GM12878 (cell line): ENCODE measurements at regions of chr2 and their contacts with region 1.

Region 1: DNA sequence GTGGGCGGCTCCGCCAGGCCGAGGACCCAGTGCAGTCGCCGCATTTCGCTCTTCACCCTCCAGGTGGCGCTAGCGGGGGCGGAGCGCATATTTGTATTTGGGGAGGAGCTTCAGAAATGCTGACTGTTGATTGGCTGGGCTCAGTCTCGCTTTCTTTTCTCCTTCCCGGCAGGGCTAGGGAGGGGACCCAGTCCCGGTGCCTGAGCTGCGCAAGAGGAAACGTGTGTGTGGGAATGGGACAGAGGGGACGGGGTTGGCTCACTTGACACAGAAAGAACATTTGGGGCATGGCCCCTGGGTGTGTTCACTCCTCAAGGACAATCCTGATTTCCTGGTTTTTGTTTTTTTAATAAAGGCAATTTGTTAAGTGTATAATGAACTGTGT is 20.3 kb upstream of the DNMT3A start:
- DNase-seq: peak; percentile 88
- ATAC-seq: peak; percentile 92
- H3K4me3 ChIP-seq: peak overlapping the region; percentile 72
- H3K27ac ChIP-seq: peak overlapping the region; percentile 84
- H3K4me1 ChIP-seq: peaks cover 13% of the 10 kb centered on the region
- H3K27me3 ChIP-seq: no peaks in the 10 kb centered on the region
- CTCF ChIP-seq: peak; percentile 93 to 99 (median 95)
- EP300 ChIP-seq: no peak; a peak in 1 of 4 replicates
- POLR2A ChIP-seq: peak; percentile 87
- RAD21 ChIP-seq: peak; percentile 37; the same call in 1 of the 2 replicates

Region 2: GRCh38 chr2:25301453-25302352 is 60.3 kb before region 1 on chr2:
- CTCF ChIA-PET with region 1: interaction called, 10 read pairs
- POLR2A ChIA-PET with region 1: interaction called, 5 read pairs
- RAD21 ChIA-PET with region 1: interaction called, 7 read pairs
- SMC1A ChIA-PET with region 1: interaction called, 4 read pairs
- in situ Hi-C with region 1: no loop called
- intact Hi-C with region 1: no loop called
- DNase-seq: peak; percentile 95
- ATAC-seq: peak; percentile 95
- H3K4me3 ChIP-seq: peak overlapping the region; percentile 43
- H3K27ac ChIP-seq: peak overlapping the region; percentile 54
- H3K4me1 ChIP-seq: peaks cover 36% of the 10 kb centered on the region
- H3K27me3 ChIP-seq: no peaks in the 10 kb centered on the region
- CTCF ChIP-seq: no peak
- EP300 ChIP-seq: peak; percentile 89 to 92
- POLR2A ChIP-seq: peak; percentile 46; the same call in 1 of the 2 replicates
- RAD21 ChIP-seq: no peak

Region 3: DNA sequence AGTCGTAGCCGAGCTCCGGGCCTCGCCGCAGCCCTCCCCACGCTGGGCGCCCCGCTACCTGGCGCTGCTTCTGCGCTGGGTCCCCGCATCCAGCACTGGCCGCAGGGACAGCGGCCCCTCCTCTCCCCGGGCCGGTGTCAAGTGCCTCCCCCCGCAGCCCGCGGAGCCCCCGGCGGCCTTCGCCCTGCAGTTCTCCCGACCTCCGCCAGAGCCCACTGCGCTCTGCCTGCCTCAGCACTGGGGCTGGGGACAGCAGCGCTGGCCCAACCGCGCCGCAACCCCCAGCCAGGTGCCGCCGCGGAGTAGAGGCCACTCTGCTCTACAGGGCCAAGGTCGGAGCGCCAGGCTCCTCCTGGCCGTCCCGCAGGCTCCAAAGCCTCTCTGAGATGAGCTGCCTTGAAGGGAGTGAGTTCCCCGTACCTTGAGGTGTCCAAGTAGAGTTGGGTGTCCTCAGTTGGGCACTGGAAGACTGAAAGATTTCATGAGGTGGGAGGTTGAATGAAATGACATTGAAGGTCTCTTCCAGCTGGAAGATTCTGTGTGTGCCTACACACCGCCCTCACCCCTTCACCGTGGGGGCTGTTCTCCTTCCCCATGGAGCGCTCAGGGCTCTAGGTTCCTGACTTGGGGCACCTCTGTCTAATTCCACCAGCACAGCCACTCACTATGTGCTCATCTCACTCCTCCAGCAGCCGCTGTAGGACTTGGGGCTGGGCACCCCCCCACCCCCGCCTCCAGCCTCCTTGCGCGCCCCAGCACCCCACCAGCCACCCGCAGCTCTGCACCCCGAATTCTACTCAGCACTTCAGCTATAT is 19.5 kb before region 1 on chr2:
- CTCF ChIA-PET with region 1: interaction called, 43 read pairs
- POLR2A ChIA-PET with region 1: interaction called, 5 read pairs
- RAD21 ChIA-PET with region 1: interaction called, 6 read pairs
- SMC1A ChIA-PET with region 1: interaction called, 8 read pairs
- in situ Hi-C with region 1: no loop called
- intact Hi-C with region 1: no loop called
- DNase-seq: no peak
- ATAC-seq: peak; percentile 94
- H3K4me3 ChIP-seq: peak overlapping the region; percentile 76; the same call in 1 of the 2 replicates
- H3K27ac ChIP-seq: peak overlapping the region; percentile 52
- H3K4me1 ChIP-seq: peaks cover 12% of the 10 kb centered on the region
- H3K27me3 ChIP-seq: no peaks in the 10 kb centered on the region; a peak in 1 of 4 replicates
- CTCF ChIP-seq: peak; percentile 93 to 99 (median 97)
- EP300 ChIP-seq: no peak
- POLR2A ChIP-seq: peak; percentile 50; the same call in 1 of the 2 replicates
- RAD21 ChIP-seq: peak; percentile 90

Region 4: DNA sequence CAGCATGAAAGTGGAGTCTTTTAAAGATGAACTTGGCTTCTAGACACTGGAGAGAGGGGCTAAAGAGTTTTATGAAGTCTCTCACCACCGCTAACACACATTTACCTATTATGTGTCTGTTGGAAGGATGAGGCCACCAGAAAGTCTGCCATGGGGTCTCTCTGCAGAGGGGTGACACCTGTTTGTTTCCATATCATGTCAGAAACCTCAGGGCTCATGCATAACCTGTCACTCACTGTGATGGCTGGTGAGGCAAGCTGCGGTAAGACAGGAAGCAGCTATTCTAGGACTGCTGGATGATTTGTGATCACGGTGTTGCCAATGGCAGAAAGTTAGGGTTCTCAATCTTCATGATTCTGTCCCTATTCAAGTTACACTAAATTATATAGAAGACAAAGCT is 40.4 kb after region 1 on chr2:
- CTCF ChIA-PET with region 1: interaction called, 30 read pairs
- POLR2A ChIA-PET with region 1: interaction called, 23 read pairs
- RAD21 ChIA-PET with region 1: interaction called, 25 read pairs
- SMC1A ChIA-PET with region 1: interaction called, 16 read pairs
- in situ Hi-C with region 1: no loop called
- intact Hi-C with region 1: no loop called
- DNase-seq: no peak
- ATAC-seq: peak; percentile 57
- H3K4me3 ChIP-seq: peak overlapping the region; percentile 35; the same call in 1 of the 2 replicates
- H3K27ac ChIP-seq: peak overlapping the region; percentile 97
- H3K4me1 ChIP-seq: peaks cover 58% of the 10 kb centered on the region
- H3K27me3 ChIP-seq: no peaks in the 10 kb centered on the region
- CTCF ChIP-seq: no peak
- EP300 ChIP-seq: peak in 1 of 2 experiments; percentile 74; a peak in 2 of 4 replicates
- POLR2A ChIP-seq: peak; percentile 32; the same call in 1 of the 2 replicates
- RAD21 ChIP-seq: no peak

Region 5: DNA sequence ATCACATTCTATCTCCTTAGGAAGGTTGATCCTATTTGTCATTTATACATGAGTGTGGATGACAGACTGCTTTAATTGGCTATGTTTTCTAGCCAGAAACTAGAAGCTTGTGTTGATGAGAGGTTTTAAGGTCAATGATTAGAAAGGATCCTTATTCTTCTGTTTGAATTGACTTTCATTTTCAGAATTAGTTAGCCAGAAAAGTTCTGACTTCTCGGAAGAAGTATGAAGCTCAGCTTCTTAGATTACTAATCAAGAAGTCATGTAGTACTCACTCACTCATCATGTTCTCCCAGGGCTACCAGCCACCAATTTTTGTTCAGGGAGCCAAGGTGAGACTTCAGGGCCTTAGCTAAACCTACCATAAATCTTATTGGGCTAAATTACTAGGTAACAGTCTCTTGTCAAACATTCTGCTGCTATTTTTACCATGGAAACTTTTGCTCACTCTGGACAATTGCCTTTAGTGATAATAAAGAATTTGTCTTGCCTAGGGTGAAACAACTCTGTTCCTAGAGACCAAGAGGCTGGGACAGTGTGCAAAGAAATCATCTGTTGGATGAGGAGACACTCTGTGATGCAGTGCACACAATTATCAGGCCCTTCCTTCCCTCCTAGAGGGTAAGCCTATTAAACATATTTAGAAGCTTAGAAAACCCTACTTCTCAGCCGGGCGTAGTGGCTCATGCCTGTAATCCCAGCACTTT is 91.3 kb after region 1 on chr2:
- CTCF ChIA-PET with region 1: interaction called, 7 read pairs
- POLR2A ChIA-PET with region 1: interaction called, 7 read pairs
- RAD21 ChIA-PET with region 1: interaction called, 7 read pairs
- SMC1A ChIA-PET with region 1: interaction called, 3 read pairs
- in situ Hi-C with region 1: no loop called
- intact Hi-C with region 1: loop called (anchors 1 kb)
- DNase-seq: peak; percentile 69
- ATAC-seq: peak; percentile 96
- H3K4me3 ChIP-seq: no peak overlapping the region
- H3K27ac ChIP-seq: peak overlapping the region; percentile 94
- H3K4me1 ChIP-seq: peaks cover 18% of the 10 kb centered on the region
- H3K27me3 ChIP-seq: no peaks in the 10 kb centered on the region
- CTCF ChIP-seq: no peak
- EP300 ChIP-seq: no peak
- POLR2A ChIP-seq: no peak
- RAD21 ChIP-seq: no peak

Region 6: DNA sequence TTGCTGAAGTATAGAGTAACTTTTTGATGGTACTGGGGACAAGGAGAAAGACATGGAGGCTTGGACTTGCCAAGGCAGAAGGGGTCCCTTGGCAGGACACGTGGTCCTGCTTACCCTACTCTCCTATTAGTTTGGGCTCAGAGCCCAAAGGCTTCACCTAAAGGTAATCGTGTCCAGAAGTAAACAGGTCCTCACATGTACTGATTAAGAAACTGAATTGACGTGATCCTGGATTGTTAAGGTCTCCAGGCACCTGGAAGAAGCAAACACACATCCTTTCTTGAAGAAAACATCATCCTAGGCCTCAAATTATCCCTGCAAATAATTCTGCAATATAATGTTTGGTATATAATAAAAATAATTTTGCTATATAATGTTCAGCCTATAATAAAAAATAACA is 261.3 kb after region 1 on chr2:
- CTCF ChIA-PET with region 1: no interaction called
- POLR2A ChIA-PET with region 1: no interaction called
- RAD21 ChIA-PET with region 1: no interaction called
- SMC1A ChIA-PET with region 1: no interaction called
- in situ Hi-C with region 1: no loop called
- intact Hi-C with region 1: no loop called
- DNase-seq: no peak
- ATAC-seq: no peak
- H3K4me3 ChIP-seq: no peak overlapping the region
- H3K27ac ChIP-seq: no peak overlapping the region
- H3K4me1 ChIP-seq: no peaks in the 10 kb centered on the region
- H3K27me3 ChIP-seq: no peaks in the 10 kb centered on the region
- CTCF ChIP-seq: no peak
- EP300 ChIP-seq: no peak
- POLR2A ChIP-seq: no peak
- RAD21 ChIP-seq: no peak

Region 7: DNA sequence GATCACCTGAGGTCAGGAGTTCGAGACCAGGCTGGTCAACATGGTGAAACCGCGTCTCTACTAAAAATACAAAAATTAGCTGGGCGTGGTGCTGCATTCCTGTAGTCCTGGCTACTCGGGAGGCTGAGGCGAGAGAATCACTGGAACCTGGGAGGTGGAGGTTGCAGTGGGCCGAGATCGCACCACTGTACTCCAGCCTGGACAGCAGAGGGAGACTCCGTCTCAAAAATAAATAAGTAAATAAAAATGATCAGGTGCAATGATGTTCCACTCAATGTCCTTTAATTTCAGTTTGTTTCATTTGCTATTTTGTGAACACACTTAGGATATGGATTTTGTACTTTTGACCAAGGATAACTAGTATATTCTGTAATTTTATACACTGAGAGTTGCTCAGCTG is 873.0 kb after region 1 on chr2:
- CTCF ChIA-PET with region 1: no interaction called
- POLR2A ChIA-PET with region 1: no interaction called
- RAD21 ChIA-PET with region 1: no interaction called
- SMC1A ChIA-PET with region 1: no interaction called
- in situ Hi-C with region 1: no loop called
- intact Hi-C with region 1: no loop called
- DNase-seq: no peak
- ATAC-seq: no peak
- H3K4me3 ChIP-seq: no peak overlapping the region
- H3K27ac ChIP-seq: no peak overlapping the region
- H3K4me1 ChIP-seq: no peaks in the 10 kb centered on the region; the same call in 1 of the 2 replicates
- H3K27me3 ChIP-seq: no peaks in the 10 kb centered on the region
- CTCF ChIP-seq: peak in 2 of 3 experiments; percentile 8 to 11; a peak in 1 of 6 replicates
- EP300 ChIP-seq: no peak
- POLR2A ChIP-seq: no peak
- RAD21 ChIP-seq: 0 out of 2 replicates have a peak, but pooled peaks have one; percentile 20